AG04450 (cell line): ENCODE measurements at regions of chr9 and their contacts with region 1.

Region 1: GRCh38 chr9:108953983-108954574 is 19.9 kb downstream of the ABITRAM start:
- DNase-seq: no peak
- H3K4me3 ChIP-seq: no peak overlapping the region
- H3K27ac ChIP-seq: no peak overlapping the region
- H3K27me3 ChIP-seq: no peaks in the 10 kb centered on the region
- CTCF ChIP-seq: peak; percentile 73

Region 2: GRCh38 chr9:108889649-108890067 is 64.4 kb before region 1 on chr9:
- CTCF ChIA-PET with region 1: interaction called, 11 read pairs
- POLR2A ChIA-PET with region 1: no interaction called
- DNase-seq: no peak
- H3K4me3 ChIP-seq: no peak overlapping the region
- H3K27ac ChIP-seq: no peak overlapping the region
- H3K27me3 ChIP-seq: no peaks in the 10 kb centered on the region
- CTCF ChIP-seq: peak; percentile 15; the same call in 1 of the 2 replicates